ENCODE measurements at regions of chr1 and their contacts with region 1.

Region 1: DNA sequence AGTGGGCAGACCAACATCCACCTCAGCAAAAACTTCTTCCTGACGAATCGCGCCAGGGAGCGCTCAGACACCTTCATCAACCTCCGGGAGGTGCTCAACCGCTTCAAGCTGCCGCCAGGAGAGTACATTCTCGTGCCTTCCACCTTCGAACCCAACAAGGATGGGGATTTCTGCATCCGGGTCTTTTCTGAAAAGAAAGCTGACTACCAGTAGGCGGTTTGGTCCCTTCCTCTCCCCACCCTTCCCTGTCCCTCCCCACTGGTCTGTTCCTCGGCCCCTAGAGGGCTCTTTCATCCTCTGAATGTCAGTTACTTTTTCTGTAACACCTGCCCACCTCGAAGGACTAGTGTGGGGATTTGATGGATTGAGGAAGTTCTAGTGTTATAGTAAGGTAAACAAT is 46.9 kb downstream of the CAPN2 start:
- DNase-seq: no peak
- H3K4me3 ChIP-seq: no peak overlapping the region
- CTCF ChIP-seq: no peak

Region 2: DNA sequence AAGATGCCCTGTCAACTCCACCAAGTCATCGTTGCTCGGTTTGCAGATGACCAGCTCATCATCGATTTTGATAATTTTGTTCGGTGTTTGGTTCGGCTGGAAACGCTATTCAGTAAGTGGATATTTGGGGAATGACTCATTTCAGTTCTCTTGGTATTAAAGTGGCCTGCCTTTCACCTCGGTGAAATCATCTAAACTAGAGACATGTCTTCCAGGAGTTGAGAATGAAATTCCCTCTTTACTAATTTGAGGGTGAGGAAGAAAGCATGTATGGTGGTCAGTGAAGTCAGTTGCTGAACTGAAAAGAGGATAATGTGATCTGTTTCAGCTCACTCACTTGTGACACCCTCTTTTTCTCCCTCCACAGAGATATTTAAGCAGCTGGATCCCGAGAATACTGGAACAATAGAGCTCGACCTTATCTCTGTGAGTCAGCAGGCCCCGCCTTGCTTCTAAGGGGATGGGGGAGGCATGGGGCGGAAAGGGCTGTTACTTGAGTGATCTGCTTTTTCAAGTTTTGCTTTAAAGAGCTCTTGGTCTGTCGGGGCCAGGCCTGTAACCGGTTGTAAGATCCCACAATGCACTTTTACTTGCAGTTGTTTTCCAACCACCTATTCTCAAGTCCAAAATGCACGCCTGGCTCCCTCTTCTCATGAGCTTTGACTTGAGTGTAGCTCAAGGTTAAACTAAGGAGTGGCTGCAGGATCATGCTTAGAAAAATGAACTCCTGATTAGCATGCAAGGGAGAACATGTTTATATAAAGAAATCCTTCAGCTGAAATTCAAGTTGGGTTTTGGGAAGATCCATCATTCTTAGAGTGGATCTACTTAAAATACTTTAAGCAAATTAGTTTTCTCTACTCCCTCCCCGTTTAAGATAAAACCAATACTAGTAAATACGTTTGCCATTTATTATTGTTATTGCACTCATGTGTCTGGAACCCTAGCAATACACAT is 12.8 kb after region 1 on chr1:
- CTCF ChIA-PET with region 1: interaction called, 14 read pairs
- POLR2A ChIA-PET with region 1: no interaction called
- DNase-seq: peak; percentile 50
- H3K4me3 ChIP-seq: no peak overlapping the region
- CTCF ChIP-seq: no peak